Activated CD4-positive, alpha-beta T cell treated with anti-CD3 and anti-CD28 coated beads for 36 hours (primary cell): ENCODE measurements at regions of chr2 and their contacts with region 1.

Region 1: DNA sequence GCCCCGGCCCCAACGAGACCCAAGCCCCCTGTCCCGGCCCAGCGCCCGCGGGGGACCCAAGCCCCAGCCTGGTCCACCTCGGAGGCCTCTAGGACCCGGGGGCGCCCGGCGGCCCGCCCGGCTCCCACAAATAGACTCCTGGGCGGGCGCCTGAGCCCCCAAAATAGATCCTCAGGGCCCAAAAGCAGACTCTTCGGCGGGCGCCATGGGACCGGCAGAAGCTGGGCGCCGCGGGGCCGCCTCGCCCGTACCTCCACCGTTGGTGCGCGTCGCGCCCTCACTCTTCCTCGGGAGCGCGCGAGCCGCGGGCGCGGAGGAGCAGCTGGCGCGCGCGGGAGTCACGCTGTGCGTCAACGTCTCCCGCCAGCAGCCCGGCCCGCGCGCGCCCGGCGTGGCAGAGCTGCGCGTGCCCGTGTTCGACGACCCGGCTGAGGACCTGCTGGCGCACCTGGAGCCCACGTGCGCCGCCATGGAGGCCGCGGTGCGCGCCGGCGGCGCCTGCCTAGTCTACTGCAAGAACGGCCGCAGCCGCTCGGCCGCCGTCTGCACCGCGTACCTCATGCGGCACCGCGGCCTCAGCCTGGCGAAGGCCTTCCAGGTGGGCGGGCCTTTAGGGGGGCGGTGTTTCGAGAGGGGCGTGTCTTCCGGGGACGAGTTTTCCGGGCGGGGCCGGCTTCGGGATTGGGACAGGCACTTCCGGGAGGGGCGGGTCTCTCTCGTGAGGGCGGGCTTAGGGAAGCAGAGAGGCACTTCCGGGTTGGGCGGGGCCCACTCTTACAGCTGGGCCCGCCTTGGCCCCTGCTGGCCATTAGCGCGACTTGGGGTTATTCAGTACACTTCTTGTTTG is 546 bp downstream of the DUSP28 start:
- DNase-seq: peak; percentile 100
- ATAC-seq: peak; percentile 60
- H3K4me3 Mint-ChIP-seq: peak overlapping the region; percentile 82
- H3K27ac Mint-ChIP-seq: peak overlapping the region; percentile 89
- H3K4me1 Mint-ChIP-seq: peaks cover 76% of the 10 kb centered on the region
- H3K27me3 Mint-ChIP-seq: no peaks in the 10 kb centered on the region

Region 2: GRCh38 chr2:239544143-239544917 is 1016.4 kb before region 1 on chr2:
- CTCF ChIA-PET with region 1: no interaction called
- POLR2A ChIA-PET with region 1: no interaction called
- intact Hi-C with region 1: loop called in 1 of 2 experiments (anchors 10 kb)
- DNase-seq: peak; percentile 4
- ATAC-seq: no peak
- H3K4me3 Mint-ChIP-seq: no peak overlapping the region
- H3K27ac Mint-ChIP-seq: peak overlapping the region; percentile 83
- H3K4me1 Mint-ChIP-seq: peaks cover 50% of the 10 kb centered on the region
- H3K27me3 Mint-ChIP-seq: peaks cover 7% of the 10 kb centered on the region

Region 3: DNA sequence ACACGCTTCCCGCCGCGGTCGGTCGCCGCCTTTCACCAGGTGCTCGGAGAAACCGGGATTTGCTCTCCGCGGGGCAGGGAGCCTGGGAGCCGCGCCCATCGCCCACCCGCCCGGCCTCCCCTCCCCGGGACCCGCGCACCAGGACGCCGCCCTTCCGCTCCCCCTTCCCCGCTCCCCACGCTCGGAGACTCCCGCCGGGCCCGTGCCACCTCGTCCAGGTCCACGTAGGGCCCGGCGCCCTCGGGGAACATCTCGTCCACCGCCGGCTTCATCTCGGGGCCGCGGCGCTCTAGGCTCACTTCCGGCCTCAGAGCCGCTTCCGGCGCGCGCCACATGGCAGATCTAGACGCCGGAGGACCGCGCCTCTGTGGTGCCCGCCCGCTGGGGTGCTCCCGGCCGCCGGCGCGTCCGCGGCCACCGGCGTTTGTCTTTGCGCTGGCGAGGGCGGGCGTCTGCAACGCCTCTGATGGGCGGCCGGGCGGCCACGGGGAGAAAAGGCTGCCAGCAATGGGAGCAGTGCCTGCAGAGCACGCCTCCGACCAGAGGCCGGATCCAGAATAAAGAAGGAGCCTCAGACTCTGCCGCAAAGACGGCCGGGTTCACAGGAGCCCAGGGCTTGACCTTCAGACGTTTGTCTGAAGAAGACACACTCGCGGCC is 424.6 kb before region 1 on chr2 and contains the start of gene COPS9:
- CTCF ChIA-PET with region 1: no interaction called
- POLR2A ChIA-PET with region 1: no interaction called
- intact Hi-C with region 1: loop called in 1 of 2 experiments (anchors 2 kb)
- DNase-seq: peak; percentile 93
- ATAC-seq: peak; percentile 96
- H3K4me3 Mint-ChIP-seq: peak within 1 kb of the TSS; percentile 88
- H3K27ac Mint-ChIP-seq: peak within 1 kb of the TSS; percentile 91
- H3K4me1 Mint-ChIP-seq: peaks cover 25% of the 10 kb centered on the region
- H3K27me3 Mint-ChIP-seq: no peaks in the 10 kb centered on the region
- total RNA-seq, gene COPS9: 62.6 to 92.1 TPM

Region 4: DNA sequence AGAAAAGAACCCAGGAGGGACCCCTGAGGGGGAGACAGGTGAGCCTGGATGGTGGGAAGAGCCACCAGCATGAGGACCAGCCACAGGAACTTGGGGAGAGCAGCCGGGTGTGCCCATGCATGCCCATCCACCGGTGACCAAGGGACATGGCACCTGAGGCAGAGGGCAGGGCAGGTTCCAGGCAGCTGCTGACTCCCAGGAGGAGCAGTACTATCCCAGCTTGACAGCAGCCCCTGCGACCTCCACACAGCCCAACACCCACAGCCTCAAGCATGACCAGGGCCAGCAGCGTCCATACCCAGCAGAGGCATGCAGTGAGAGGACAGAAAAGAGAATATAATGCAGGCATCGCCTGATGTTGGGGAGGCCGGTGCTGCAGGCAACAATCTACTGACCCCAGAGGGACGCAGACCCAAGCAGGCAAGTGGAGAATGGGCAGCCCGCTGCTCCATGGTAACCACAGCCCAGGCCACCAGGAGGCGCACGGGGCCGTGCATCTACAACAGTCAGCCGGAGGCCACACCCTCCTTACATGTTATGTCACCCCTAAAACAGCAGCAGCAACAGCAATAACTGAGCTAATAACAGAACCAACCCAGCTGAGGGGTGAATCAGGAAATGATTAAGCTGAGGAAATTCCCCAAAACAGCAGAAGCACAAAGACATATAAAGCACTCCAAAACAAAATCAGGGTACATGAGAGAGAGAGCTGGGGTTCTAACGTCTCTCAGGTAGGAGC is 47.0 kb before region 1 on chr2:
- CTCF ChIA-PET with region 1: interaction called, 21 read pairs
- POLR2A ChIA-PET with region 1: no interaction called
- intact Hi-C with region 1: loop called (anchors 1 to 5 kb)
- DNase-seq: peak; percentile 93
- ATAC-seq: peak; percentile 99
- H3K4me3 Mint-ChIP-seq: no peak overlapping the region
- H3K27ac Mint-ChIP-seq: peak overlapping the region; percentile 71
- H3K4me1 Mint-ChIP-seq: peaks cover 13% of the 10 kb centered on the region
- H3K27me3 Mint-ChIP-seq: no peaks in the 10 kb centered on the region

Region 5: GRCh38 chr2:240528406-240529040 is 32.2 kb before region 1 on chr2:
- CTCF ChIA-PET with region 1: no interaction called
- POLR2A ChIA-PET with region 1: no interaction called
- intact Hi-C with region 1: no loop called
- DNase-seq: no peak
- ATAC-seq: no peak
- H3K4me3 Mint-ChIP-seq: no peak overlapping the region
- H3K27ac Mint-ChIP-seq: no peak overlapping the region
- H3K4me1 Mint-ChIP-seq: no peaks in the 10 kb centered on the region
- H3K27me3 Mint-ChIP-seq: no peaks in the 10 kb centered on the region

Region 6: GRCh38 chr2:240832205-240832727 is 271.6 kb after region 1 on chr2:
- CTCF ChIA-PET with region 1: no interaction called
- POLR2A ChIA-PET with region 1: no interaction called
- intact Hi-C with region 1: loop called (anchors 1 kb)
- DNase-seq: peak; percentile 98
- ATAC-seq: peak; percentile 96
- H3K4me3 Mint-ChIP-seq: peak overlapping the region; percentile 63
- H3K27ac Mint-ChIP-seq: no peak overlapping the region
- H3K4me1 Mint-ChIP-seq: peaks cover 2% of the 10 kb centered on the region
- H3K27me3 Mint-ChIP-seq: peaks cover 19% of the 10 kb centered on the region

Region 7: DNA sequence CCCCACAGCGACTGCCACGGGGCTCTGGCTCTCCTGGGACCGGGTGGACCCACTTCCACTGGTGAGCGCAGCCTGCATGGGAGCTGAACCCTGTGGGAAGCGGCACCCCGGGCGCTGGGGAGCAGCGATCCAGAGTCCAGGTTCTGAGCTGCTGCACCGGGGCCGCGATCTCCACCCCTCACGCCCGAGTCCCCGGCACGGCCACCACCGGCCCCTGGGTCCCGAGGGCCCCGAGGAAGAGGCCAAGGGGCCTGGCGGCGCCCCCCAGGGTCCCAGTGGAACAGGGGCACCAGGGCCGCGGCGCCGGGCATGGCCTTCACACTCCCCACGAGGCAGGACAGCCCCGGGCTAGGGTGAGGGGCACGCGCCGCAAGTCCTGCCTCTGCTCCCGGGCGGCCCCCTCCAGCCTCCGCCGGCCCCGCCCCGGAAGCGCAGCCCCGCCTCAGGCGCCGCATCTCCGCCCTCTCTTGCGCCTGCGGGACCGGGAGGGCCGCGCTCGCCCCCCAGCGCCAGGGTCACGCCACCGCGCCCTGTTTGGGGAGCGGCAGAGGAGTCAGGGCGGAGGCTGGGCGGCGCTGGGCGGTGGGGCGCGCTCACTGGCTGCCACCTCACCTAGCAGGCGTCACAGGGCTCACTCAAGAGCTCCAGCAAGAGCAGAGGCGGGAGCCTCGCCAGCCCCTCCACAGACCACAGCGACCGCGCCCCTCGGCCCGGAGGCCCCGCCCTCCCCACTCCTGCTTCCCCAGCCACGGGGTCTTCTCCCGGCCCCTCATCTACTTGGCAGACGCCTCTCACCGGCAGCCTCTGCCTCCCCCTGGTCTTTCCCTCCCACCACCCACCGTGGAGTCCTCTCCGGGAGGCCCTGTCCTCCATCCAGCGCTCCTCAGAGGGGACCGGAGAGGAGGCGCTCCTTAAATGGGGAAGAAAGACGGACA is 1049.4 kb after region 1 on chr2:
- CTCF ChIA-PET with region 1: no interaction called
- POLR2A ChIA-PET with region 1: no interaction called
- intact Hi-C with region 1: loop called in 1 of 2 experiments (anchors 2 kb)
- DNase-seq: peak; percentile 96
- ATAC-seq: peak; percentile 100
- H3K4me3 Mint-ChIP-seq: peak overlapping the region; percentile 48
- H3K27ac Mint-ChIP-seq: peak overlapping the region; percentile 67
- H3K4me1 Mint-ChIP-seq: peaks cover 14% of the 10 kb centered on the region
- H3K27me3 Mint-ChIP-seq: no peaks in the 10 kb centered on the region

Region 8: DNA sequence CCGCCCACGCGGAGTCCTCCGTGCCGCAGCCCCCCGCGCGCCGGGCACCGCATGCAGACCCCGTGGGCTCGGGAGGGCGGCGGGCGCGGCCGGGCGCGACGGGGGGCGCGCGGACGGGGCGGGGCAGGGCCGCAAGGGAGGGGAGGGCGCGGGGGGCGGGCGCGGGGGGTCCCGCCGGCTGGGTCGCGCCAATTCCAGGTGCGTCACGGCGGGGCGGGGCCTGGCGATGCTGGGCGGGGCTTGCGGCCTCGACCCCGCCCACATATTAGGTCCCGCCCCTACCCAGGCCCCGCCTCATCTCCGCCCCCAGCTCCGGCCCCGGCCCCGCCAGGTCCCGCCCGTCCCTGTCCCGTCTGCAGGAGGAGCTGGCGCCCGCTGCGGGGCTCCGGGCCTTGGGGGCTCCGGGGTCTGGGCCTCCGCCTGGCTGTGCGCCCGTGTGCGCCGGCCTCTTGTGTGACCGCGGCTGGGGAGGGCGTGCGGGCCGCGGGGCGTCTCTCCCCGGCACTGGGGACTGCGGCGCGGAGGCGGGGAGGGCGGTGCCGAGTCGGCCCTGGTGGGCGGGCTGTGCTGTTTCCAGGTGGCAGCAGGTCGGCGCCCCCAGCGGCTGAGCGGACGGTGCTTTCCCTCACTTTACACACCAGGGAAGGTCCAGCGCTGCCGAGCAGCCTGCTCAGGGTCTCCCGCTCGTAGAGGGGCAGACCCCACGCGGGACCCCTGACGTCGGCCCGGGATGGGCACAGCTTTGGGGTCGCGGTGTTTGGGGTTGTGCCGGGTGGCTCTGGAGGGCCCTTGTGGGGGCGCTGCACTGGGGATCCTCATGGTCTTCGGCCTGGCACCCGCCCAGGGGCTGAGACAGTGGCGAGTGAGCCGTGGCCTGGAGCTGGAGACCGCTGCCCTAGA is 1141.7 kb after region 1 on chr2:
- CTCF ChIA-PET with region 1: no interaction called
- POLR2A ChIA-PET with region 1: no interaction called
- intact Hi-C with region 1: loop called in 1 of 2 experiments (anchors 1 kb)
- DNase-seq: peak; percentile 94
- ATAC-seq: peak; percentile 70
- H3K4me3 Mint-ChIP-seq: peak overlapping the region; percentile 86
- H3K27ac Mint-ChIP-seq: peak overlapping the region; percentile 75
- H3K4me1 Mint-ChIP-seq: peaks cover 29% of the 10 kb centered on the region
- H3K27me3 Mint-ChIP-seq: no peaks in the 10 kb centered on the region